ENCODE measurements at regions of chr7 and their contacts with region 1.

Region 1: GRCh38 chr7:93245525-93246432 is 13.6 kb downstream of the VPS50 start:
- DNase-seq: peak; percentile 57
- ATAC-seq: no peak
- H3K4me3 ChIP-seq: no peak overlapping the region
- H3K27ac ChIP-seq: no peak overlapping the region
- H3K4me1 ChIP-seq: no peaks in the 10 kb centered on the region
- H3K27me3 ChIP-seq: no peaks in the 10 kb centered on the region
- CTCF ChIP-seq: peak; percentile 76

Region 2: DNA sequence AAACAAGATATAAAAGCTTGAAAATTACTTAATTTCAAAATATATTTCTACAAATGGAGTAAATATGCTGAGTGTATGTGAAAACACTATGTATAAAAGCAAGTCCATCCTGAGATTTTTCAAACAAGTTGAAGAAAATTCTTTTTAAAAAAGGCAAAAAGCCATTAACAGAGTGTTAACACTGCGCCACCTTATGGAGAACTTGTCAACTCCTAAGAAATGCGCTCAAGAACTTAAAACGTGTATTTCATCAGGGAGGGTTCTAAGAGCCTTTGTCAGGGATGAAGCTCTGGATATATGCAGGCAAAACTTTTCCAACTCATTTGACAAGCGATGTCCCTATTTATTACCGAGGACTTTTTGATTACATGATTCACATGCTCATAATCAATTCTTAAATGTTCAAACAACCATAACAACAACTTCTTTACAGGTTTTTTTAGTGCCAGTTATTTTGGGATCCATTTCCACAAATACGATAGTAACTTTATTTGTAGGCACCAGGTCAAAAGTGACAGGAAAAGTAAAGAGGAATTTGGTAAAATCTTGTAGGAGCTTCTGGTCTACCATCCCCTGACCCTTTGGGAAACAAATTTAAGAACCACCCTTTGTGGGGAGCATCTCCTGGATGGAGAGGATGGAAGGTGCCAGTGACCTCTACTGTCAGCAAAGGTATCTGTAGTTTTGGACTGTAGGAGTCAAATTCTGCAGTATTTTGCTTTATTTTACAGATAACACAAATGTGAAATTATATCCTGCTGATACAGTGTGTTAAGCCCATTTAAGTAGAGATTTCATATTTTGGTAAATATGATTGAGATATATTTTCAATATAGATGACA is 305.5 kb after region 1 on chr7:
- CTCF ChIA-PET with region 1: no interaction called
- POLR2A ChIA-PET with region 1: no interaction called
- intact Hi-C with region 1: loop called (anchors 1 kb)
- DNase-seq: peak; percentile 57
- ATAC-seq: peak; percentile 69
- H3K4me3 ChIP-seq: no peak overlapping the region
- H3K27ac ChIP-seq: no peak overlapping the region
- H3K4me1 ChIP-seq: no peaks in the 10 kb centered on the region
- H3K27me3 ChIP-seq: peaks cover 57% of the 10 kb centered on the region
- CTCF ChIP-seq: peak; percentile 73

Measured in PC-3 (cell line).